Activated B cell treated with CpG ODN at 0.5 μM for 24 hours (primary cell): ENCODE measurements at regions of chr9 and their contacts with region 1.

Region 1: DNA sequence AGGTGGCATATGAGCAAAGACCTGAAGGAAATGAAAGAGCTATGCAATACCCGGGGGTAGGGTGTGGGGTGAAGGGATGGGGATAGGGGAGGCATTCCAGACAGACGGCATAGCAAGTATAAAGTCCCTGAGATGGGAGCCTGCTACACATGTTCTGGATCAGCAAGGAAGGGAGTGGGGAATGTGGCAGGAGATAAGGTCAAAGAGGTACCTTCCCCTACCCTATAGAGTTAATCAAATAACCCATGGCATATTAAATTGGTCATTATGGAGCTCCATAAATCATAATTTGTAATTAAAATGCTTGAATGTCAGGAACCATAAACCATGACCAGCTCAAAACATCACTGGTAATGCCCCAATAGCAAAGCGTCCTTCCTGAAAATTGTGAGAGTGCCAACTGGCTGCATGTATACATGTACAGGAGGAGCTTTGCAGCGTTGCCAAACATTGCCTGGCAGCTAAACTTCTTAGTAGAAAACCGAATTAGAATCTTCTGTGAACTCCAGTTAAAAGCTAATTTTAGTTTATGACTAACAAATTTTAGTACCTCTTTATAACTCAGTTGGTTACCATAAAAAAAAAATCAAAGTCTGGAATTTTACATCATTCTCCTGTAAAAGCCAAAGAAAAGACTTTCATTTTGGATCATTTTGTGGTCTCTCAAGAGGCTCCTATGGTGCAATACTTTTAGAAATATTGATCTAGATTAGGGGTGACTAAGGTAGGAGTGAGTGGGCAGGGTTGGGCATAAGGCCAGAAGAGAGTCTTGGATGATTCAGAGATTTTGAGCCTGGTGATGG is 4.7 kb downstream of the DNAI1 start:
- DNase-seq: no peak
- ATAC-seq: no peak
- H3K4me3 Mint-ChIP-seq: no peak overlapping the region
- H3K27ac Mint-ChIP-seq: no peak overlapping the region
- H3K4me1 Mint-ChIP-seq: peaks cover 10% of the 10 kb centered on the region
- H3K27me3 Mint-ChIP-seq: peaks cover 14% of the 10 kb centered on the region
- CTCF ChIP-seq: no peak

Region 2: GRCh38 chr9:33972698-33973097 is 490.6 kb before region 1 on chr9:
- CTCF ChIA-PET with region 1: no interaction called
- POLR2A ChIA-PET with region 1: no interaction called
- intact Hi-C with region 1: no loop called
- DNase-seq: no peak
- ATAC-seq: no peak
- H3K4me3 Mint-ChIP-seq: no peak overlapping the region
- H3K27ac Mint-ChIP-seq: no peak overlapping the region
- H3K4me1 Mint-ChIP-seq: no peaks in the 10 kb centered on the region
- H3K27me3 Mint-ChIP-seq: no peaks in the 10 kb centered on the region
- CTCF ChIP-seq: no peak

Region 3: GRCh38 chr9:34540828-34541227 is 77.5 kb after region 1 on chr9:
- CTCF ChIA-PET with region 1: no interaction called
- POLR2A ChIA-PET with region 1: interaction called, 10 read pairs
- intact Hi-C with region 1: no loop called
- DNase-seq: no peak
- ATAC-seq: no peak
- H3K4me3 Mint-ChIP-seq: no peak overlapping the region
- H3K27ac Mint-ChIP-seq: no peak overlapping the region
- H3K4me1 Mint-ChIP-seq: no peaks in the 10 kb centered on the region
- H3K27me3 Mint-ChIP-seq: peaks cover 10% of the 10 kb centered on the region
- CTCF ChIP-seq: no peak

Region 4: GRCh38 chr9:35029852-35030251 is 566.6 kb after region 1 on chr9:
- CTCF ChIA-PET with region 1: no interaction called
- POLR2A ChIA-PET with region 1: no interaction called
- intact Hi-C with region 1: no loop called
- DNase-seq: no peak
- ATAC-seq: no peak
- H3K4me3 Mint-ChIP-seq: no peak overlapping the region
- H3K27ac Mint-ChIP-seq: no peak overlapping the region
- H3K4me1 Mint-ChIP-seq: peaks cover 7% of the 10 kb centered on the region
- H3K27me3 Mint-ChIP-seq: no peaks in the 10 kb centered on the region
- CTCF ChIP-seq: no peak